ENCODE measurements at regions of chr9 and their contacts with region 1.

Region 1: GRCh38 chr9:130824643-130825350 is 10.3 kb upstream of the ABL1 start:
- DNase-seq: peak; percentile 80 to 91 (median 88)
- ATAC-seq: peak; percentile 89
- H3K4me3 ChIP-seq: no peak overlapping the region
- H3K27ac ChIP-seq: peak overlapping the region; percentile 29; the same call in 2 of the 3 replicates
- H3K4me1 ChIP-seq: peaks cover 15 to 20% of the 10 kb centered on the region in 2 experiments
- H3K27me3 ChIP-seq: no peaks in the 10 kb centered on the region
- CTCF ChIP-seq: no peak
- EP300 ChIP-seq: no peak
- POLR2A ChIP-seq: no peak
- RAD21 ChIP-seq: no peak

Region 2: GRCh38 chr9:130794923-130795495 is 29.8 kb before region 1 on chr9:
- CTCF ChIA-PET with region 1: interaction called, 3 read pairs
- POLR2A ChIA-PET with region 1: interaction called, 10 read pairs
- in situ Hi-C with region 1: no loop called
- intact Hi-C with region 1: no loop called
- DNase-seq: no peak
- ATAC-seq: no peak
- H3K4me3 ChIP-seq: no peak overlapping the region
- H3K27ac ChIP-seq: no peak overlapping the region
- H3K4me1 ChIP-seq: no peaks in the 10 kb centered on the region
- H3K27me3 ChIP-seq: no peaks in the 10 kb centered on the region
- CTCF ChIP-seq: no peak
- EP300 ChIP-seq: no peak
- POLR2A ChIP-seq: no peak
- RAD21 ChIP-seq: no peak

Region 3: GRCh38 chr9:130805510-130806326 is 19.1 kb before region 1 on chr9:
- CTCF ChIA-PET with region 1: interaction called, 4 read pairs
- POLR2A ChIA-PET with region 1: interaction called, 93 read pairs
- in situ Hi-C with region 1: no loop called
- intact Hi-C with region 1: no loop called
- DNase-seq: peak in 1 of 4 experiments; percentile 49
- ATAC-seq: peak; percentile 10; the same call in 2 of the 3 replicates
- H3K4me3 ChIP-seq: no peak overlapping the region
- H3K27ac ChIP-seq: no peak overlapping the region
- H3K4me1 ChIP-seq: no peaks in the 10 kb centered on the region
- H3K27me3 ChIP-seq: no peaks in the 10 kb centered on the region
- CTCF ChIP-seq: no peak
- EP300 ChIP-seq: no peak
- POLR2A ChIP-seq: no peak
- RAD21 ChIP-seq: no peak

Region 4: DNA sequence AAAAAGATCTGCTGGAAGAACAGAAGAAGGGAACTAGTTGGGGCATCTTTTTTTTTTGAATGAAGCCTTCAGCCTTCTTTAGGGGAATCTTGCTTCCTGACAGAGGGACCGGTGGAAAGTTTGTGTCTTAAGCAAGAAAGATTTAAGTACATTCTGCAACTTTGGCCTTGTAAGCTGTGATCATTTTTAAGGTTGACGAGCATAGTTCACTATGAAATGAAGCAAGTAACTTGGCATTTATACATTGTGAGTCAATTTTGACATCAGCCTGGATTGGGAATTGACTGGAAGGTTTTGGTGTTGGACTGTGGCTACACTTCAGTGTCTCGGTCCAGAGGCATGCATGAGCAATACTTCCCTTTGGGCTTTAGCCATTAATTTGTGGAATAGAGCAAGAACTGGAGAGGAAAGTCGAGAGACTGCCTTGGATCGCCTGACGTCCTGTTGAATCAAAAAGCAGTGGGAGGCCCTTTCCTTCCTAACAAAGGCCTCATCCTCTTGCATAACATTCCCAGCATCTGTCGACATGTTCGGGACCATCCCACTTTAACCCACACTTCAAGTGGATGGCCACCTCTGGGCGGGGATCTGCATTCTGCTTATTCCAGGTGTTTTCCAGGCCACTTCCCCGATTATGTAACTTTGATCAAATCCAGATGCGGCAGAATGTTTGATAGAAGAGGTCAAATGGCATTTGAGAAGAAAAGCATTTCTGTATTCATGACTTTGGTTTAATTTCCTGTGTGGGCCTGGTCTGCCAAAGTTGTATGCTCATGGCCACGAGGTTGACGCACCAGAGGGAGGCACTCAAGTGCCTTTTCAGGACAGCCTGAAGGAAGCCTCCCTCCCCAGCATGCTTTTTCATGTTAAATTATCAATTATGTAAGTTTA is 22.8 kb after region 1 on chr9:
- CTCF ChIA-PET with region 1: interaction called, 3 read pairs
- POLR2A ChIA-PET with region 1: interaction called, 160 read pairs
- in situ Hi-C with region 1: no loop called
- intact Hi-C with region 1: loop called (anchors 1 kb)
- DNase-seq: peak in 1 of 4 experiments; percentile 66
- ATAC-seq: no peak
- H3K4me3 ChIP-seq: no peak overlapping the region
- H3K27ac ChIP-seq: no peak overlapping the region
- H3K4me1 ChIP-seq: peaks cover 26 to 29% of the 10 kb centered on the region in 2 experiments
- H3K27me3 ChIP-seq: no peaks in the 10 kb centered on the region
- CTCF ChIP-seq: no peak
- EP300 ChIP-seq: no peak
- POLR2A ChIP-seq: no peak
- RAD21 ChIP-seq: no peak

Region 5: GRCh38 chr9:130854092-130854491 is 29.3 kb after region 1 on chr9:
- CTCF ChIA-PET with region 1: interaction called, 3 read pairs
- POLR2A ChIA-PET with region 1: interaction called, 25 read pairs
- in situ Hi-C with region 1: no loop called
- intact Hi-C with region 1: no loop called
- DNase-seq: peak; percentile 84 to 88 (median 87)
- ATAC-seq: peak; percentile 80
- H3K4me3 ChIP-seq: no peak overlapping the region
- H3K27ac ChIP-seq: no peak overlapping the region
- H3K4me1 ChIP-seq: no peaks in the 10 kb centered on the region; a peak in 1 of 5 replicates
- H3K27me3 ChIP-seq: no peaks in the 10 kb centered on the region
- CTCF ChIP-seq: no peak
- EP300 ChIP-seq: no peak
- POLR2A ChIP-seq: no peak
- RAD21 ChIP-seq: no peak